Naive thymus-derived CD4-positive, alpha-beta T cell (primary cell): ENCODE measurements at regions of chr5 and their contacts with region 1.

Region 1: DNA sequence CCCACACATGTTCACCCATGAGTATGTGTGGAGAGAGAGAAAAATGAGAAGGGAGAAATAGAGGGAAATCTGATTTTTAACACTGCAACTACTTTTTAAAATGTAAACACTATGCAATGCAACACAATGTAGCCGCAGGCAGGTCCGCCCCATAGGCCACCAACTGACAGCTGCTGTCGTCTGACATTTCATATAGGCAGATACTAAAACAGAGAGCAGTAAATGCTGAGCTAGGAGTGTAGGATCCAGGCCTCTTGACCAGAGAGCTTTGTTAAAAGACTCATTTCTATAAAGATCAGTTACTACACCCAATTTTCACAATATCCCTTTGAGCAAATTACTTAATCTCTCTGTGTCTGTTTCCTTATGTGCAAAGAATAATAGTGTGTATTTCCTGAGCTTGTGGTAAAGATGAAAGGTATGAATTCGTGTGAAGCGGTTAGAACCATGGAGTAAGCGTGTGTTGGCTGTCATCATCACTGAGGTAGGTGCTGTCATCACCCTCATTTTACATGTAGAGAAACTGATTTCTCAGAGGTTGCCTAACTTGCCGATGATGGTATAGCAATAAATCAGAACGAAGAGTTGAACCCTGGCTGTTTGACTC is 55.2 kb upstream of the PDE8B start:
- DNase-seq: peak in 7 of 9 donors; percentile 81 to 94 (median 91)
- ATAC-seq: peak; percentile 96
- H3K4me3 ChIP-seq: no peak overlapping the region
- H3K4me3 Mint-ChIP-seq: peak overlapping the region in 9 of 10 donors; percentile 22 to 83 (median 60)
- H3K27ac ChIP-seq: peak overlapping the region; percentile 67
- H3K27ac Mint-ChIP-seq: peak overlapping the region in 8 of 9 donors; percentile 74 to 99 (median 96)
- H3K4me1 ChIP-seq: peaks cover 0 to 27% of the 10 kb centered on the region in 2 donors
- H3K4me1 Mint-ChIP-seq: peaks cover 17 to 40% (median 33%) of the 10 kb centered on the region in 7 donors
- H3K27me3 ChIP-seq: no peaks in the 10 kb centered on the region
- H3K27me3 Mint-ChIP-seq: peaks cover 0 to 12% (median 3%) of the 10 kb centered on the region in 5 donors

Region 2: GRCh38 chr5:77086689-77087483 is 68.4 kb before region 1 on chr5 and contains the start of gene ZBED3:
- CTCF ChIA-PET with region 1: no interaction called
- POLR2A ChIA-PET with region 1: no interaction called
- intact Hi-C with region 1: loop called in 1 of 2 experiments (anchors 2 kb)
- DNase-seq: peak; percentile 33 to 76 (median 60)
- ATAC-seq: peak; percentile 82
- H3K4me3 ChIP-seq: peak within 1 kb of the TSS; percentile 74
- H3K4me3 Mint-ChIP-seq: peak within 1 kb of the TSS; percentile 85 to 96 (median 93)
- H3K27ac ChIP-seq: peak within 1 kb of the TSS; percentile 62
- H3K27ac Mint-ChIP-seq: peak within 1 kb of the TSS; percentile 59 to 94 (median 86)
- H3K4me1 ChIP-seq: peaks cover 3 to 6% of the 10 kb centered on the region in 2 donors
- H3K4me1 Mint-ChIP-seq: peaks cover 5 to 20% (median 17%) of the 10 kb centered on the region in 7 donors
- H3K27me3 ChIP-seq: no peaks in the 10 kb centered on the region
- H3K27me3 Mint-ChIP-seq: peaks cover 0 to 12% (median 5%) of the 10 kb centered on the region in 5 donors
- total RNA-seq, gene ZBED3: 0.56 to 4.0 (median 2.8) TPM

Region 3: DNA sequence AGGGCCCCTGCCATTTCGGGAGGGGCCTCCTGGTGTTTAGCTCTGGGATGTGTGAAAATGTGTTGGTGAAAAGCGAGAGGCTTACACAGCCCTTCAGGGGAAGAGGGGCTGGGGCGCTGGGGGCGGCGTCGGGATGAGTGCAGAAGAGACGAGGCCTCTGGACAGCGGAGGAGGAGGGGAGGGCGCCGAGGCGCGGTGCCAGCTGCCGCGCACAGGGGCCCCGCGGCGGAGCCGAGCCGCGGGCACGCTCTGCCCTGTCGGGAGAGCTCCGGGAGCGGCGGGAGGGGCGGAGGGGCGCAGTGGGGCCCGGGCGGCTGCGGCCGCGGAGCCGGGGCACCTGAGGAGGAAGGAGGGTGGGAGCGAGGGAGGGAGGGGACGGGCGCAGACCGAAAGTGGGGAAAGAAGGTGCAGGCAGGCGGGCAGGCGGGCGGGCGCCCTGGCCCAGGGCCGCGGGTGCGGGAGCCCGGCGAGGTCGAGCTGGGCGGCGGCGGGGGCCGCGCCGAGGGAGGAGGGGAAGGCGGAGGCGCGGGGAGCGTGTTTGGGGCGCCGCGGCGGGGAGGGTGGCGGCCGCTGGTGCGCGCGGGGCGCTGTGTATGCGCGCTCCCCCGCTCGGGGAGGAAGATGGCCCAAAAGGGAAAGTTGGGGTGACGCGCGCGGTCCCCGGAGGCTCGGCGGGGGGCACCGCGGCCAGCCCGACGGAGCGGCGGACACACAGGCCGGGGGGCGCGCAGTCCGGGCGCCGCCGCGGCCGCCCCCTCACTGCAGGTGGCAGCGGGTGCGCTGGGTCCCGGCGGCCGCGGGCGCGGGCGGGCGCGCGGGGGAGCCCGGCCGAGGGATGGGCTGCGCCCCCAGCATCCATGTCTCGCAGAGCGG is 55.0 kb after region 1 on chr5 and contains the start of gene PDE8B:
- CTCF ChIA-PET with region 1: no interaction called
- POLR2A ChIA-PET with region 1: no interaction called
- intact Hi-C with region 1: loop called in 1 of 2 experiments (anchors 2 kb)
- DNase-seq: peak in 6 of 9 donors; percentile 26 to 38 (median 31)
- ATAC-seq: peak; percentile 75
- H3K4me3 ChIP-seq: peak within 1 kb of the TSS; percentile 33
- H3K4me3 Mint-ChIP-seq: peak within 1 kb of the TSS; percentile 84 to 90 (median 86)
- H3K27ac ChIP-seq: no peak within 1 kb of the TSS
- H3K27ac Mint-ChIP-seq: peak within 1 kb of the TSS in 5 of 9 donors; percentile 12 to 84 (median 71)
- H3K4me1 ChIP-seq: peaks cover 0 to 8% of the 10 kb centered on the region in 2 donors
- H3K4me1 Mint-ChIP-seq: peaks cover 7 to 23% (median 14%) of the 10 kb centered on the region in 7 donors
- H3K27me3 ChIP-seq: peaks cover 3 to 16% of the 10 kb centered on the region in 2 donors
- H3K27me3 Mint-ChIP-seq: peaks cover 55 to 69% (median 61%) of the 10 kb centered on the region in 5 donors
- total RNA-seq, gene PDE8B: 1.2 TPM in 1 of 5 experiments, not detected in the others

Region 4: GRCh38 chr5:77518304-77518703 is 363.0 kb after region 1 on chr5:
- CTCF ChIA-PET with region 1: no interaction called
- POLR2A ChIA-PET with region 1: no interaction called
- intact Hi-C with region 1: no loop called
- DNase-seq: no peak
- ATAC-seq: no peak
- H3K4me3 ChIP-seq: no peak overlapping the region
- H3K4me3 Mint-ChIP-seq: no peak overlapping the region
- H3K27ac ChIP-seq: no peak overlapping the region
- H3K27ac Mint-ChIP-seq: no peak overlapping the region
- H3K4me1 ChIP-seq: no peaks in the 10 kb centered on the region
- H3K4me1 Mint-ChIP-seq: no peaks in the 10 kb centered on the region
- H3K27me3 ChIP-seq: no peaks in the 10 kb centered on the region
- H3K27me3 Mint-ChIP-seq: peaks cover 5 to 14% (median 10%) of the 10 kb centered on the region in 5 donors

Region 5: GRCh38 chr5:78359831-78360673 is 1204.8 kb after region 1 on chr5 and contains the start of gene SCAMP1:
- CTCF ChIA-PET with region 1: no interaction called
- POLR2A ChIA-PET with region 1: no interaction called
- intact Hi-C with region 1: loop called in 1 of 2 experiments (anchors 10 kb)
- DNase-seq: peak; percentile 84 to 96 (median 93)
- ATAC-seq: peak; percentile 92
- H3K4me3 ChIP-seq: peak within 1 kb of the TSS; percentile 99
- H3K4me3 Mint-ChIP-seq: peak within 1 kb of the TSS; percentile 89 to 97 (median 94)
- H3K27ac ChIP-seq: peak within 1 kb of the TSS; percentile 85
- H3K27ac Mint-ChIP-seq: peak within 1 kb of the TSS; percentile 71 to 97 (median 96)
- H3K4me1 ChIP-seq: peaks cover 11 to 16% of the 10 kb centered on the region in 2 donors
- H3K4me1 Mint-ChIP-seq: peaks cover 27 to 64% (median 55%) of the 10 kb centered on the region in 7 donors
- H3K27me3 ChIP-seq: no peaks in the 10 kb centered on the region
- H3K27me3 Mint-ChIP-seq: no peaks in the 10 kb centered on the region
- total RNA-seq, gene SCAMP1: 16.9 to 27.6 (median 23.0) TPM